PC-9 (cell line): ENCODE measurements at regions of chr9 and their contacts with region 1.

Region 1: DNA sequence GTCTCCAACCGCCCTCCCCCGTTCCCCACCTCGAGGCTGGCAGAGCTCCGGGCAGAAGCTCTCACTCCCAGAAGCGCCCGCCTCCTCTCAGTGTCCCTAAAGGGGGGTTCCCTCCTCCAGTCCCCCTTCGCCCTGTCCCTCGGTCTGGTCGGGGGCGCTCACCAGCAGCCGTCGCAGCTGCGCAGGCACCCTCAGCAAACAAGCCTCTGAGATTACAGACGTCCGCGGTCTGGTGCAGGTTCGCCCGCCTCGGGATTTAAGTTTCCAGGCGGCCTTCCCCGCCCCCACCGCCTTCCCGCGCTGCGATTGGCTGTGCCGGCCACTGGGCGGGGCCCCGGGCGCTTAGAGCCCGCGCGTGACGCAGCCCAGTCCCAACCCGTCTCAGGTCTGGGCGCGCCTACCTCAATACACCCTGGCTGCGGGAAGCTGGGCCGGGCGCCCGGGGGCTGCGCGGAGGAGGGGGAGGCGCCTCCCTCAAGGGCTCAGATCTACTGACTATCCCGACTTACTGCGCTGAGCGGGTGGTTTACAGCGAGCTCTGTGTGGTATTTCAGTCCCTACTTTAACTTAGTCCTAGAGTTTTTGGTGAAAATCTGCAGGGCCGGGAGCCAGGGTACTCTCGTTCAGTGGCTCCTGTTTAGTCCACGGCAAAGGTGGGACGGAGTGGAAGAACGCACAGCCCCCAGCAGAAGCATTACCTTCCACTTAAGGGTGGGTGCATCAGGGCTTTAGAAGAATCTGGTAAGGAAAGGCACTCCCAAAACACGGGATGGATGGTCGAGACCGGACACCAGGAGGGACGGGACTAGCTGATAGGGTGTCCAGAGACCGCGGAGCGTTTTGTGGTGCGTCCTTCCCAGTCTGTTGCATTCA is at the start of gene CTSV:
- DNase-seq: peak; percentile 80 to 97
- H3K4me3 ChIP-seq: peak within 1 kb of the TSS; percentile 60
- H3K27ac ChIP-seq: no peak within 1 kb of the TSS
- H3K4me1 ChIP-seq: peaks cover 28% of the 10 kb centered on the region
- H3K27me3 ChIP-seq: no peaks in the 10 kb centered on the region
- CTCF ChIP-seq: no peak
- total RNA-seq, gene CTSV: 47.3 and 65.2 TPM in 2 replicates

Region 2: GRCh38 chr9:97062417-97062985 is 23.4 kb after region 1 on chr9:
- CTCF ChIA-PET with region 1: no interaction called
- POLR2A ChIA-PET with region 1: interaction called, 33 read pairs
- intact Hi-C with region 1: no loop called
- DNase-seq: peak; percentile 66 to 98
- H3K4me3 ChIP-seq: no peak overlapping the region
- H3K27ac ChIP-seq: peak overlapping the region; percentile 79
- H3K4me1 ChIP-seq: peaks cover 40% of the 10 kb centered on the region
- H3K27me3 ChIP-seq: no peaks in the 10 kb centered on the region
- CTCF ChIP-seq: no peak

Region 3: GRCh38 chr9:97109194-97109811 is 70.2 kb after region 1 on chr9:
- CTCF ChIA-PET with region 1: no interaction called
- POLR2A ChIA-PET with region 1: no interaction called
- intact Hi-C with region 1: loop called (anchors 1 kb)
- DNase-seq: peak; percentile 62 to 68
- H3K4me3 ChIP-seq: no peak overlapping the region
- H3K27ac ChIP-seq: no peak overlapping the region
- H3K4me1 ChIP-seq: peaks cover 9% of the 10 kb centered on the region
- H3K27me3 ChIP-seq: no peaks in the 10 kb centered on the region
- CTCF ChIP-seq: peak; percentile 78

Region 4: DNA sequence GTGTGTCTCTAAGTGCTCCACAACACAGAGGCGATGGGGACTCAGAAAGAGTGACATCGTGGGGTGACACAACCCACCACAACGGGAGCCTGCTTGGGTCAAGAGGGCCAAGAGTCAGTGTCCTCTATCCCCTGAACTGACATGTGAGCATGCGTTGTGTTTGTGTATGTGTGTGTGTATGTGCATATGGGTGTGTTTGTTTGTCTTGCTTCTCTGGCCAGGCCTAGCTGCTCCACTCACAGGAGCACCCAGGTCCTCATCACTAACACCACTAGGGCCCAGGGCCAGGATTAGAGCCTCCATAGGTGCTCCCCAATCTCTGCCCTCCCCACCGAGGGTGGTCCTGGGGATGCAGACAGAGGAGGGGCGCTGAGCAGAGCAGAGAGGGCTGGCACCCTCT is 114.8 kb after region 1 on chr9:
- CTCF ChIA-PET with region 1: no interaction called
- POLR2A ChIA-PET with region 1: no interaction called
- intact Hi-C with region 1: no loop called
- DNase-seq: no peak
- H3K4me3 ChIP-seq: no peak overlapping the region
- H3K27ac ChIP-seq: no peak overlapping the region
- H3K4me1 ChIP-seq: no peaks in the 10 kb centered on the region
- H3K27me3 ChIP-seq: no peaks in the 10 kb centered on the region
- CTCF ChIP-seq: no peak

Region 5: DNA sequence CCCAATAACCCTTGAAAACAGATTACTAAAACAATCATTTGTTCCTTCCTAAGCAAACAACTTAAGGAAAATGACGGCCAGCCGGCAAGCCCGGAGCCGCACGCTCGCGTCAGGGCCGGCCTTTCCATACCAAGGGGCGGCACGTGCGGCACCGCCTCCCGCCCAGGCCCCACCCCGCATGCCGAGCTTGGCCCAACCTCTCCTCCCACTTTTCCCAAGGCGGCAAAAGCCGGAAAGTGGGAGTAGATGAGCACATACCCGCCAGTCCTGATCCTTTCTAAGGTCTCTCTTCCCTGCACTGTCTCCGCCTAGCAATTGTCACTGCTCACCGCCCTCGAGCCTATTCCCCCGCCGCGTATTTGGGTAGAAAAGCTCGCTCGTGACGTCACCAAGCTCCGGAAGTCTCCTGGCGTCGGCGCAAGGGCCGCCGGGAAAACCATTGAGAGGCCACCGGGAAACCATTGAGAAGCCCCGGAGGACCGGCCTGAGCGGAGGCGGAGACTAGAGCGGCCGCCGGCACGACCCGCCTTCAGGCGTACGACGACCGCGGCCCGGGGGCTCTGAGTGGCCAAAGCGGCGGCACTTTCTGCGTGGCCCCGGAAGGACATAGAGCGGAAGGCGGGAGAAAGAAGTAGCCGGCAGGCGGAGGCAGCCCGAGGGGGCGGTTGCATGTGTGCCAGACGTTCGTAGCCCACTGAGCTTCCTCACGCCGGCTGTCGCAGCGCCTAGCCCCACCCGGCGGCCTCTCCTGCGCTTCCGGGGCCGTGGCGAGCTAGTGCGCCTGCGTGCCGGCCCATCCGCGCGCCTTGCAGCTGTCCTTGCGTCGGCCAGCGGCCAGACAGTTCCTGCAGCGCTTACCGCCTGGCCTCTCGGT is 594.1 kb after region 1 on chr9 and contains the starts of genes NCBP1 and TSTD2:
- CTCF ChIA-PET with region 1: no interaction called
- POLR2A ChIA-PET with region 1: no interaction called
- intact Hi-C with region 1: no loop called
- DNase-seq: peak; percentile 94 to 98
- H3K4me3 ChIP-seq: peak within 1 kb of the TSS; percentile 95
- H3K27ac ChIP-seq: peak within 1 kb of the TSS; percentile 99
- H3K4me1 ChIP-seq: peaks cover 38% of the 10 kb centered on the region
- H3K27me3 ChIP-seq: no peaks in the 10 kb centered on the region
- CTCF ChIP-seq: no peak
- total RNA-seq, gene NCBP1: 38.6 and 40.2 TPM in 2 replicates
- total RNA-seq, gene TSTD2: 17.0 and 19.3 TPM in 2 replicates